ENCODE measurements at regions of chr20 and their contacts with region 1.

Region 1: GRCh38 chr20:4476903-4477500 is 244.7 kb upstream of the PRND start:
- DNase-seq: no peak
- ATAC-seq: no peak
- H3K4me3 ChIP-seq: no peak overlapping the region
- H3K27ac ChIP-seq: no peak overlapping the region
- H3K4me1 ChIP-seq: peaks cover 7% of the 10 kb centered on the region; the same call in 1 of the 2 replicates
- H3K27me3 ChIP-seq: no peaks in the 10 kb centered on the region
- CTCF ChIP-seq: no peak
- POLR2A ChIP-seq: no peak
- RAD21 ChIP-seq: no peak

Region 2: GRCh38 chr20:3420211-3420707 is 1056.7 kb before region 1 on chr20:
- CTCF ChIA-PET with region 1: no interaction called
- POLR2A ChIA-PET with region 1: no interaction called
- dilution Hi-C with region 1: no loop called
- in situ Hi-C with region 1: no loop called
- intact Hi-C with region 1: loop called (anchors 5 kb)
- DNase-seq: peak; percentile 41
- ATAC-seq: no peak; the same call in 1 of the 2 replicates
- H3K4me3 ChIP-seq: no peak overlapping the region
- H3K27ac ChIP-seq: no peak overlapping the region
- H3K4me1 ChIP-seq: no peaks in the 10 kb centered on the region
- H3K27me3 ChIP-seq: peaks cover 3% of the 10 kb centered on the region; the same call in 1 of the 2 replicates
- CTCF ChIP-seq: no peak
- POLR2A ChIP-seq: no peak
- RAD21 ChIP-seq: no peak

Region 3: GRCh38 chr20:4435225-4435624 is 41.8 kb before region 1 on chr20:
- CTCF ChIA-PET with region 1: no interaction called
- POLR2A ChIA-PET with region 1: no interaction called
- dilution Hi-C with region 1: no loop called
- in situ Hi-C with region 1: no loop called
- intact Hi-C with region 1: no loop called
- DNase-seq: peak; percentile 71
- ATAC-seq: peak; percentile 83
- H3K4me3 ChIP-seq: no peak overlapping the region
- H3K27ac ChIP-seq: peak overlapping the region; percentile 38; the same call in 1 of the 2 replicates
- H3K4me1 ChIP-seq: peaks cover 13% of the 10 kb centered on the region
- H3K27me3 ChIP-seq: no peaks in the 10 kb centered on the region
- CTCF ChIP-seq: no peak
- POLR2A ChIP-seq: no peak
- RAD21 ChIP-seq: no peak

Region 4: GRCh38 chr20:4534315-4534714 is 57.3 kb after region 1 on chr20:
- CTCF ChIA-PET with region 1: no interaction called
- POLR2A ChIA-PET with region 1: no interaction called
- dilution Hi-C with region 1: no loop called
- in situ Hi-C with region 1: no loop called
- intact Hi-C with region 1: no loop called
- DNase-seq: no peak
- ATAC-seq: no peak
- H3K4me3 ChIP-seq: no peak overlapping the region
- H3K27ac ChIP-seq: no peak overlapping the region
- H3K4me1 ChIP-seq: peaks cover 4% of the 10 kb centered on the region
- H3K27me3 ChIP-seq: no peaks in the 10 kb centered on the region
- CTCF ChIP-seq: no peak
- POLR2A ChIP-seq: no peak
- RAD21 ChIP-seq: no peak